Gastrocnemius medialis (tissue), 4 donors: ENCODE measurements at regions of chr1 and their contacts with region 1.

Region 1: GRCh38 chr1:175319418-175320230 is 127.0 kb upstream of the KIAA0040 start:
- DNase-seq: peak; percentile 69 to 71
- ATAC-seq: peak; percentile 86 to 89
- H3K4me3 ChIP-seq: no peak overlapping the region
- H3K27ac ChIP-seq: peak overlapping the region; percentile 21 to 74 (median 49)
- H3K4me1 ChIP-seq: peaks cover 6 to 16% of the 10 kb centered on the region in 2 donors
- H3K27me3 ChIP-seq: no peaks in the 10 kb centered on the region
- CTCF ChIP-seq: peak; percentile 86 to 90 (median 88)
- POLR2A ChIP-seq: no peak

Region 2: GRCh38 chr1:175023043-175023921 is 296.3 kb before region 1 on chr1 and contains the start of gene MRPS14:
- in situ Hi-C with region 1: loop called in 3 of 4 experiments (anchors 10 to 25 kb)
- intact Hi-C with region 1: loop called (anchors 10 kb)
- DNase-seq: peak; percentile 95 to 98
- ATAC-seq: peak; percentile 98
- H3K4me3 ChIP-seq: peak within 1 kb of the TSS; percentile 93 to 99 (median 98)
- H3K27ac ChIP-seq: peak within 1 kb of the TSS; percentile 88 to 95 (median 90)
- H3K4me1 ChIP-seq: peaks cover 15 to 22% of the 10 kb centered on the region in 2 donors
- H3K27me3 ChIP-seq: no peaks in the 10 kb centered on the region
- CTCF ChIP-seq: no peak
- POLR2A ChIP-seq: peak; percentile 84 to 86
- total RNA-seq, gene MRPS14: 10.8 to 15.6 (median 12.3) TPM

Region 3: DNA sequence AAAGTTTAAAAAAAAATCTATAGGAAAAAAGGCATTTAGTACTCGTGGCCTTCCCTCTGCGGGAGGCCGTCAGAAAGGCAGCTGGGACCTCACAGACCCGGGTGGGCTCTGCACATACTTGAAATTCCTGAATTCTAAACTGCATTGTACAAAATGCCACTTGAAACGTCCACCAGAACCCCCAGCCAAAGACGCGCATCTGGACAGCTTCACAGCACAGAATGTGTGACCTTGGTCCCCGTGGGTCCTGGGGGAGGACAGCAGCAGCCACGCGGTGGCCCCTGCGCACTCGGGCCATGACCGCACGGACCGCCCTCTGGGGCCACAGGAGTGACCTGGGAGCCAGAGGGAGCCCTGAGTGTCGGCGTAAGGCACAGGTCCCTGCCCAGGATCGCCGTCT is 275.8 kb before region 1 on chr1:
- in situ Hi-C with region 1: loop called in 2 of 4 experiments (anchors 25 kb)
- intact Hi-C with region 1: no loop called
- DNase-seq: no peak
- ATAC-seq: no peak
- H3K4me3 ChIP-seq: no peak overlapping the region
- H3K27ac ChIP-seq: no peak overlapping the region
- H3K4me1 ChIP-seq: no peaks in the 10 kb centered on the region
- H3K27me3 ChIP-seq: peaks cover 0 to 2% (median 0%) of the 10 kb centered on the region in 3 donors
- CTCF ChIP-seq: no peak
- POLR2A ChIP-seq: no peak

Region 4: DNA sequence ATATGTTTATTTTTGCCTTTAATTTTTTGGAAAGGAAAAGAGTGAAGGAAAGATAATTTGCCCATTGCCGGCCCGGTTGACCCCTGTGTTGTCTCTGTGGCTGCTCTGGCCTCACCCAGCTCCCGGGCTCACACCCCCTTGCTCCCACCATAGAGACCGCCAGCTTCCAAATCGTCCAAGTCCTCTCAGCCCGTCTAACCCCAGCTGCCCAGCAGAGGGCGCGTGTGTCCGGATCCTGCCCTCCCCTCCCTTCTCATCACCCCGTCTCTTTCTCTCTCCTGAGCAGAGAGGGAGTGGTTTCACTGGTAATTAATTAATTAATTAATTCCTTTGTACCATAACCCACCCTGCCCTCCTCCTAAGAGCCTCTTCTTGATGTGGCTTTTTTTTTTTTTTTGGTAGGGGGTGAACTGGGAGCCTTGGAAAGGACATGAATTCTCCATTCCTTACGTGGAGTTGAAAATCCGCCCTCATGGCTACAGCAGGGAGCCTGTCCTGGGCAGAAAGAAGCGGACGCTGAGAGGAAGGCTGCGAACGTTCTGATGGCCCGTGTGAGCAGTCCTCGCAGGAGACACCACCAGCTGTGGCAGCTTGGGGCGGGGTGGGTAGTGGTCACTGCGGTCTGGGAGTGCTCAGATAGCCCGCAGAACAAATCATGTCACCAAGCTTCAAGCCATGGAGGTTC is 173.0 kb before region 1 on chr1:
- in situ Hi-C with region 1: loop called in 1 of 4 experiments (anchors 5 kb)
- intact Hi-C with region 1: no loop called
- DNase-seq: peak; percentile 19 to 41
- ATAC-seq: peak; percentile 56 to 66
- H3K4me3 ChIP-seq: no peak overlapping the region
- H3K27ac ChIP-seq: no peak overlapping the region
- H3K4me1 ChIP-seq: peaks cover 0 to 6% of the 10 kb centered on the region in 2 donors
- H3K27me3 ChIP-seq: no peaks in the 10 kb centered on the region
- CTCF ChIP-seq: peak; percentile 43 to 80 (median 62)
- POLR2A ChIP-seq: no peak